KBM-7 (cell line): ENCODE measurements at regions of chr1 and their contacts with region 1.

Region 1: GRCh38 chr1:115613767-115614166 is 28.0 kb upstream of the VANGL1 start:
- DNase-seq: no peak

Region 2: DNA sequence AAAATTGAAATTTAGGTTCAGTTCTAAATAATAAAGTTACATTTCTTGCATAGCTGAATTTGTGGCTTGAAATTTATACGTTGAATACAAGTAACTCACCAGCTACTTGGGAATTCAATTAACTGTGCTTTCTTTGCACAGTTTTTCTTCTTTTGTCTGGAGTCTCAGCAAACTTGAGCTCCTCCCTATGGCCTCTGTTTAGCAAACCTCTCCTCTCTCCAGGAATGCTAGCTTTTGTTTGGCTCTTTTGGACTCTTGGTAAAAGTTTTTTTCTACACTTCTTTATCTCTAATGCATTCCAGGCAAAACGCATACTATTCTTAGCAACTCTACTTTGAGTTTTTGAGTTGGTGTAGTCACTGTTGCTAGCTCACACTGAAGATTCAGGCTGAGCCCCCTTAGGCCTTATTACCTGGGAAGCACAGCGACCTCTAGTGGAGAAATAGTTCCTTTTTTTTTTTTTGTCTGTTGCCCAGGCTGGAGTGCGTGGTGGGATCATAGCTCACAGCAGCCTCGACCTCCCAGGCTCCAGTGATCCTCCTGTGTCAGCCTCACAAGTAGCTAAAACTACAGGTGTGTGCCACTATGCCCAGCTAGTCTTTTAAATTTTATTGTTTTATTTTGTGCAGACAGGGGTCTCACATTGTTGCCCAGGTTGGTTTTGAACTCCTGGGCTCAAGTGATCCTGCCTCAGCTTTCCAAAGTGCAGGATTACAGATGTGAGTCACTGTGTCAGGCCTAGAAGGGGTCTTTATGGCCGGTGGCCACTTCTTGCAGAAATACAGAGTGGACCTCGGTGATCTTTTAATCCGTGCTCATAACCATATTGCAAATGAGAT is 93.0 kb after region 1 on chr1:
- in situ Hi-C with region 1: loop called (anchors 10 kb)
- DNase-seq: peak; percentile 79